K562 (cell line): ENCODE measurements at regions of chr1 and their contacts with region 1.

Region 1: DNA sequence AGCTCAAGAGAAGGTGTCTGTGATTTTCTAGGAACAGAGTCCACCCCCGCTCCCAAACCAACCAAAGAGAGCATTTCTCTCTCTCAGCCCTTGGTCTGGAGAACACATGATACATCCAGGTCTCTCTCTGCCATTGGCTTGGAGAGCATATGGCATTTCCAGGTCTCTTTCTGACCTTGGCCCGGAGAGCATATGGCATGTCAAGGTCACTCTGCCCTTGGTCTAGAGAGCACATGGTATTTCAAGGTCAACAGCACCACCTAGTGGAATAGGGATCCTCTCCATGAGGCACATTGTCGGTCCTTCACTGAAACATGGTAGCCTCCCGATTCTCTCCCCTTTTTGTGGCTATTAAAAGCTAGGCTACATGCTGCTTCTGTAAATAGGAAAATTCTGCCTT is 437.7 kb upstream of the OLFM3 start:
- DNase-seq: peak in 3 of 4 experiments; percentile 2 to 51 (median 3)
- ATAC-seq: peak; percentile 61
- H3K4me3 ChIP-seq: no peak overlapping the region
- H3K27ac ChIP-seq: no peak overlapping the region
- H3K4me1 ChIP-seq: no peaks in the 10 kb centered on the region
- H3K27me3 ChIP-seq: no peaks in the 10 kb centered on the region
- CTCF ChIP-seq: peak; percentile 21 to 51 (median 43); a peak in 4 of 6 replicates
- EP300 ChIP-seq: no peak
- POLR2A ChIP-seq: no peak
- RAD21 ChIP-seq: peak; percentile 44 to 61

Region 2: DNA sequence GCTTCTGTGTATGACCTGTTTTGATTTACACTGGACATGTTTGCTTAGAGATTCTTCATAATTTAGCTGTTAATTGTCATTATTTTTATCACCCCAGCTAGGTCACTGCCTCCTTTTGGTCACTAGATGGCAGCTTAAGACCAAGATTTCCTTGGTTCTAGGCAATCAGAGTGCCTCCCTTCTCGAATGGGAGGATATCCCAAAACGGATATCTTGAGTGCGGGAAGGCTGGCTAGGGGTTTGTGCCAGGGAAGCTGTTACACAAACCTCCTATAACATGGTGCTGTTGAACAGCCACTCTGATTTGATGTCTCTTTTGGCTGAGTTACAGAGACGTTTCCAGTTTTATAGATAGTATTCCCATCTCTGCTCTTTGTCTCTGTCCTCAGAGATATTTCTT is 914.1 kb before region 1 on chr1:
- CTCF ChIA-PET with region 1: no interaction called
- POLR2A ChIA-PET with region 1: no interaction called
- in situ Hi-C with region 1: no loop called
- intact Hi-C with region 1: loop called (anchors 10 kb)
- DNase-seq: peak; percentile 10 to 21 (median 16)
- ATAC-seq: peak; percentile 36; the same call in 1 of the 3 replicates
- H3K4me3 ChIP-seq: no peak overlapping the region
- H3K27ac ChIP-seq: no peak overlapping the region
- H3K4me1 ChIP-seq: no peaks in the 10 kb centered on the region
- H3K27me3 ChIP-seq: no peaks in the 10 kb centered on the region
- CTCF ChIP-seq: peak; percentile 18 to 55 (median 50); a peak in 5 of 6 replicates
- EP300 ChIP-seq: no peak
- POLR2A ChIP-seq: no peak
- RAD21 ChIP-seq: peak; percentile 53 to 66